ENCODE measurements at regions of chrX and their contacts with region 1.

Region 1: DNA sequence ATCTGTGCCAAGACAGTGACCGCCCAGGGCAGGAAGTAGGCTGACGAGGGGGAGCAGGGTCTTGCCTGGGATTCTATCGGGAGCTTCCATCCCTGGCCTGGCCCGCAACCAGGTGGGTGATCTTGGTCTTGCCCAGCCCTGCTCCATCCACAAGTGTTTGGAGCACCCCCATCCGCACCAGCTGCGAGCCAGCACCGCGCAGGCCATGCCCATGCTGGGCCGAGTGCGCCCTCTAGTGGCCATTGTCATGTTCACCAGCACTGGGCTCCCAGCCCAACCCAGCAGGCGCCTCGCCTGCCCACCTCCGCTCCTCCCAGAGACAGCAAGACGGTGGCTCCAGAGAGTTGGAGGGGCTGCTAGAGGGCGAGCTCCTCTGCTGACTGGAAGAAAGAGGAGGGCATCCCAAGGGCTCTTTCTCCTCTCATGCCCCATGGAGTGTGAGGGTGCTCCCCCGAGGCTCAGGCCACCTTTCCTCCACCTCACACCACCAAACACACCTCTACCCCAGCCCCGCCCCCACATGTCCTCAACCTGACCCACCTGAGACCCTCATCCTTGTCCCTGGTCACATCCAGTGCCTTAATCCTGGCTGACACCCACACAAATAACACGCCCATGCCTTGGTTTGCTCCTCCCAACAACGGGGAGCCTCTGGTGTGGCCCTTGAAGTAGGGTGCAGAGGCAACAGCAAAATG is 9.8 kb upstream of the ATP2B3 start:
- DNase-seq: peak; percentile 85
- ATAC-seq: peak; percentile 100
- H3K4me3 Mint-ChIP-seq: no peak overlapping the region
- H3K27ac Mint-ChIP-seq: no peak overlapping the region
- H3K4me1 Mint-ChIP-seq: peaks cover 6% of the 10 kb centered on the region
- H3K27me3 Mint-ChIP-seq: no peaks in the 10 kb centered on the region

Region 2: GRCh38 chrX:153460845-153461244 is 46.8 kb before region 1 on chrX:
- CTCF ChIA-PET with region 1: interaction called, 14 read pairs
- POLR2A ChIA-PET with region 1: no interaction called
- DNase-seq: peak; percentile 48
- ATAC-seq: peak; percentile 57
- H3K4me3 Mint-ChIP-seq: no peak overlapping the region
- H3K27ac Mint-ChIP-seq: no peak overlapping the region
- H3K4me1 Mint-ChIP-seq: no peaks in the 10 kb centered on the region
- H3K27me3 Mint-ChIP-seq: no peaks in the 10 kb centered on the region

Region 3: GRCh38 chrX:153470435-153471363 is 36.9 kb before region 1 on chrX and contains the start of gene HAUS7:
- CTCF ChIA-PET with region 1: interaction called, 38 read pairs
- POLR2A ChIA-PET with region 1: no interaction called
- DNase-seq: peak; percentile 89
- ATAC-seq: peak; percentile 90
- H3K4me3 Mint-ChIP-seq: peak within 1 kb of the TSS; percentile 82
- H3K27ac Mint-ChIP-seq: peak within 1 kb of the TSS; percentile 85
- H3K4me1 Mint-ChIP-seq: peaks cover 9% of the 10 kb centered on the region
- H3K27me3 Mint-ChIP-seq: peaks cover 4% of the 10 kb centered on the region
- total RNA-seq, gene HAUS7: 56.6 to 57.7 TPM